ENCODE measurements at regions of chr3 and their contacts with region 1.

Region 1: GRCh38 chr3:59212128-59212779 is 162.4 kb upstream of the CFAP20DC start:
- DNase-seq: peak in 7 of 9 donors; percentile 11 to 60 (median 53)
- ATAC-seq: peak; percentile 83
- H3K4me3 ChIP-seq: no peak overlapping the region
- H3K4me3 Mint-ChIP-seq: no peak overlapping the region
- H3K27ac ChIP-seq: no peak overlapping the region
- H3K27ac Mint-ChIP-seq: no peak overlapping the region
- H3K4me1 ChIP-seq: no peaks in the 10 kb centered on the region
- H3K4me1 Mint-ChIP-seq: peaks cover 0 to 10% (median 5%) of the 10 kb centered on the region in 7 donors
- H3K27me3 ChIP-seq: no peaks in the 10 kb centered on the region
- H3K27me3 Mint-ChIP-seq: peaks cover 0 to 11% (median 8%) of the 10 kb centered on the region in 5 donors

Region 2: GRCh38 chr3:58994746-58995330 is 217.4 kb before region 1 on chr3:
- CTCF ChIA-PET with region 1: no interaction called
- POLR2A ChIA-PET with region 1: no interaction called
- intact Hi-C with region 1: loop called in 1 of 2 experiments (anchors 10 kb)
- DNase-seq: peak in 7 of 9 donors; percentile 20 to 58 (median 47)
- ATAC-seq: peak; percentile 65
- H3K4me3 ChIP-seq: no peak overlapping the region
- H3K4me3 Mint-ChIP-seq: no peak overlapping the region
- H3K27ac ChIP-seq: no peak overlapping the region
- H3K27ac Mint-ChIP-seq: no peak overlapping the region
- H3K4me1 ChIP-seq: no peaks in the 10 kb centered on the region
- H3K4me1 Mint-ChIP-seq: peaks cover 0 to 4% (median 0%) of the 10 kb centered on the region in 7 donors
- H3K27me3 ChIP-seq: peaks cover 0 to 3% of the 10 kb centered on the region in 2 donors
- H3K27me3 Mint-ChIP-seq: peaks cover 4 to 16% (median 7%) of the 10 kb centered on the region in 5 donors

Region 3: DNA sequence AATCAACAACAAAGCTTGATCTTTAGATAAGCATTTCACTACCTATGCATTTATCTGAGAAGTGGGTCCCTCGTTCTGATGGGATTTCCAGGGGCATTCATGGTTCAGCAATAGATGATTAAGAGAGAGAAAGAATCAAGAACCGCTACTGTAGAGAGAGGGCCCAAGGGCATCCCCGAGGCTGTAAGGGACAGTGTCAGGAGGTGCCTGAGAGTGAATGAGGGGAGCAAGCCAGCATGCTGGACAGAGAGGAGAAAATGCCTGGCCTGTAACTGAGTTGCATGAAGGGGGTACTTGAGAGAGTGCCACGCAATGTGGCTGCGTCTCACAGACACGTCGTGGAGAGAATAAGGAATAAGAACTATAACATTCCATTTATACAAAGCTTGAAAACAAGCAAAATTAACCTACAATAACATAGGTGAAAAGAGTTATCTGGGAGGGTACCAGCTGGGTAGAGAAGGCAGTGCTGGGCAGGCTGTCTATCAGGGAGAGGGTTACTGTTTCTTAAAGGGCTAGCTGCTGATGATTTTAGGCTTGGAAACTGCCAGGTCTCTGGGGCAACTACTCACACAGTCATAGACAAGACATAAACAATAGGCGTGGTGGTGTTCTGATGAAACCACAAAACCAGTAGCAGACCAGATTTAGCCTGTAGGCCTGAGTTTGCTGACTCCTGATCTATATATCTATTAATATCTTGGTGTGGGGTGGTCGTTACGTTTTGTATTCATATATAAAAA is 212.2 kb after region 1 on chr3:
- CTCF ChIA-PET with region 1: no interaction called
- POLR2A ChIA-PET with region 1: no interaction called
- intact Hi-C with region 1: loop called in 1 of 2 experiments (anchors 2 kb)
- DNase-seq: peak in 5 of 9 donors; percentile 20 to 72 (median 50)
- ATAC-seq: peak; percentile 76
- H3K4me3 ChIP-seq: no peak overlapping the region
- H3K4me3 Mint-ChIP-seq: peak overlapping the region; percentile 25 to 63 (median 34)
- H3K27ac ChIP-seq: no peak overlapping the region
- H3K27ac Mint-ChIP-seq: peak overlapping the region; percentile 44 to 92 (median 76)
- H3K4me1 ChIP-seq: peaks cover 46 to 50% of the 10 kb centered on the region in 2 donors
- H3K4me1 Mint-ChIP-seq: peaks cover 36 to 59% (median 52%) of the 10 kb centered on the region in 7 donors
- H3K27me3 ChIP-seq: no peaks in the 10 kb centered on the region
- H3K27me3 Mint-ChIP-seq: no peaks in the 10 kb centered on the region

Region 4: GRCh38 chr3:59688636-59689035 is 476.4 kb after region 1 on chr3:
- CTCF ChIA-PET with region 1: no interaction called
- POLR2A ChIA-PET with region 1: no interaction called
- intact Hi-C with region 1: no loop called
- DNase-seq: no peak
- ATAC-seq: no peak
- H3K4me3 ChIP-seq: no peak overlapping the region
- H3K4me3 Mint-ChIP-seq: no peak overlapping the region
- H3K27ac ChIP-seq: no peak overlapping the region
- H3K27ac Mint-ChIP-seq: no peak overlapping the region
- H3K4me1 ChIP-seq: no peaks in the 10 kb centered on the region
- H3K4me1 Mint-ChIP-seq: peaks cover 0 to 5% (median 0%) of the 10 kb centered on the region in 7 donors
- H3K27me3 ChIP-seq: no peaks in the 10 kb centered on the region
- H3K27me3 Mint-ChIP-seq: peaks cover 0 to 4% (median 0%) of the 10 kb centered on the region in 5 donors

Region 5: DNA sequence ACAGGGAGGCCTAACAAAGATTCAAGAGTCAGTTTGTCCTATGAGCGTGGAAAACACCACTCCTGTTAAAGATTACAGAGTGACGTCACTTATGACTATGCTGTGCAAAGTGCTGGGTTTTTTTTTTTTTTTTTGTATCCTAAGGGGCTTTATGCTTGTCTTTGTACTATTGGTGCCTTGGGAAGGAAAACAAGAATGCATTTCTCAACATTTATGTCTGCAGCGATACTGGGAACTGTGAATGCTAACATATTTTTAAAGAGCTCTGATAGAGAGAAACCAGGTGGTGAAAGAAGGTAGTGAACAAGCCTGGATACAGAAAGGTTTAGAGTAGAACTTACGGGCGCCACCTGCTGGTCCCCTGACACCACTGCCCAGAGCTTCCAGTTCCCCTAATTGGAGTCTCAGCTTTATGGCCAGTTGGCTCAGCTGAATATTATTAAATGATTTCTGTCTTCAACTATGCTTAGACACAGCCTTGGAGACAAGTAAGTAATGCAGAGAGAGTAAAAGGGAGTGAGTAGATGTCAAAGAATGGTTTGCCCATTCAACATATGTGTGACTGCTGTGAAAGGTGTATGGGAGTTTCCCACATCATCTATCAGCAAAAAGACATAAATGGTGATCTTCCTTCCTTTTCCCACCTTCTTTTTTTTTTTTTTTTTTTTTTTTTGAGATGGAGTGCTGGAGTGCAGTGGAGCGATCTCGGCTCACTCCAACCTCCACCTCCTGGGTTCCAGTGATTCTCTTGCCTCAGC is 645.5 kb after region 1 on chr3:
- CTCF ChIA-PET with region 1: interaction called, 6 read pairs
- POLR2A ChIA-PET with region 1: no interaction called
- intact Hi-C with region 1: loop called (anchors 1 kb)
- DNase-seq: peak; percentile 44 to 75 (median 67)
- ATAC-seq: peak; percentile 92
- H3K4me3 ChIP-seq: no peak overlapping the region
- H3K4me3 Mint-ChIP-seq: peak overlapping the region in 5 of 10 donors; percentile 6 to 46 (median 27)
- H3K27ac ChIP-seq: no peak overlapping the region
- H3K27ac Mint-ChIP-seq: peak overlapping the region in 6 of 9 donors; percentile 15 to 84 (median 29)
- H3K4me1 ChIP-seq: peaks cover 0 to 3% of the 10 kb centered on the region in 2 donors
- H3K4me1 Mint-ChIP-seq: peaks cover 7 to 66% (median 58%) of the 10 kb centered on the region in 7 donors
- H3K27me3 ChIP-seq: no peaks in the 10 kb centered on the region
- H3K27me3 Mint-ChIP-seq: no peaks in the 10 kb centered on the region

Region 6: GRCh38 chr3:60126511-60127304 is 914.5 kb after region 1 on chr3:
- CTCF ChIA-PET with region 1: no interaction called
- POLR2A ChIA-PET with region 1: no interaction called
- intact Hi-C with region 1: no loop called
- DNase-seq: no peak
- ATAC-seq: no peak
- H3K4me3 ChIP-seq: no peak overlapping the region
- H3K4me3 Mint-ChIP-seq: no peak overlapping the region
- H3K27ac ChIP-seq: no peak overlapping the region
- H3K27ac Mint-ChIP-seq: peak overlapping the region in 2 of 9 donors; percentile 0 to 23
- H3K4me1 ChIP-seq: no peaks in the 10 kb centered on the region
- H3K4me1 Mint-ChIP-seq: peaks cover 0 to 14% (median 10%) of the 10 kb centered on the region in 7 donors
- H3K27me3 ChIP-seq: no peaks in the 10 kb centered on the region
- H3K27me3 Mint-ChIP-seq: no peaks in the 10 kb centered on the region

Region 7: DNA sequence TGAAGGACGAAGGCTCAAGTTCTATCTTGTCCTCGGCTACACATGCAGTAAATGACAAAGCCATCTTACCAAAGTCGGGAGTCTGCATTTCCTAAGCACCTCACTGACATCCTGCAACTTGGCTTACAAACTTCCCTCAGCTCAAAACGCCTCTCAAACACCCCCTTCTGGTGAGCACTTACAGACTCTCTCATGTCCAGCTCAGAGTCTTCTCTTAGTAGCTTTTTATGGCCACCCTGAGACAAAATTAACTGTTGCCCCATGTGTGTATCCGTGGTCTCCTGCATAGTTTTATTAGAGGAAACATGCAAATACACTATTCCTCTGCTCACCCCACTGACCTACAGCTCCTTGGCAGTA is 1219.3 kb after region 1 on chr3:
- CTCF ChIA-PET with region 1: no interaction called
- POLR2A ChIA-PET with region 1: no interaction called
- intact Hi-C with region 1: loop called in 1 of 2 experiments (anchors 1 kb)
- DNase-seq: peak in 4 of 9 donors; percentile 13 to 23 (median 19)
- ATAC-seq: peak; percentile 38
- H3K4me3 ChIP-seq: no peak overlapping the region
- H3K4me3 Mint-ChIP-seq: peak overlapping the region in 4 of 10 donors; percentile 22 to 59 (median 46)
- H3K27ac ChIP-seq: no peak overlapping the region
- H3K27ac Mint-ChIP-seq: peak overlapping the region in 2 of 9 donors; percentile 21 to 60
- H3K4me1 ChIP-seq: no peaks in the 10 kb centered on the region
- H3K4me1 Mint-ChIP-seq: peaks cover 0 to 34% (median 27%) of the 10 kb centered on the region in 7 donors
- H3K27me3 ChIP-seq: peaks cover 0 to 5% of the 10 kb centered on the region in 2 donors
- H3K27me3 Mint-ChIP-seq: no peaks in the 10 kb centered on the region

Measured in naive thymus-derived CD4-positive, alpha-beta T cell (primary cell).